ENCODE measurements at regions of chr1 and their contacts with region 1.

Region 1: DNA sequence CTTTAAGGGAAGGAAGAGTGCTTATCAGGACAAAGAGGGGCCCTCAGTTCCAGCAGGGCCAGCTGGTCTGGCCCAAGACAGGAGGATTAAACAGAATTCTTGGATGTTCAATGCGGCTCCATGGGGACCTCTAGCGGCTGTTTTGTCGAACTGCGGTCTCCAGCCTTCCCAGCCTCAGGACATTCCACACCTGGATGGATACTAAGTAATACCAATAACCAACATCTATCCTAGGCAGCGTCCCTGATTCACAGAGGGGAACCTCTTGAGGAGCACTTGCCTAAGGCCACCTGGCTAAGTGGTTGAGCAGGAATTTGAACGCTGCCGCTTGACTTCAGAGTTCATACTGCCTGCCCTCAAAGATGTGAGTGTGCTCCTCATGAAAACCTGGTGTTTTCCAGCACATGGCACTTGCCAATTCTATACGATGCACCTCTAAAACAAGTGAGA is 15.5 kb upstream of the CD247 start:
- DNase-seq: peak; percentile 48
- ATAC-seq: peak; percentile 92
- H3K4me3 ChIP-seq: no peak overlapping the region
- H3K27ac ChIP-seq: no peak overlapping the region
- H3K4me1 ChIP-seq: no peaks in the 10 kb centered on the region
- H3K27me3 ChIP-seq: no peaks in the 10 kb centered on the region; the same call in 1 of the 2 replicates
- CTCF ChIP-seq: peak; percentile 94

Region 2: GRCh38 chr1:167263819-167264464 is 269.9 kb before region 1 on chr1:
- CTCF ChIA-PET with region 1: interaction called, 13 read pairs
- POLR2A ChIA-PET with region 1: no interaction called
- in situ Hi-C with region 1: no loop called
- intact Hi-C with region 1: loop called (anchors 10 kb)
- DNase-seq: no peak
- ATAC-seq: no peak
- H3K4me3 ChIP-seq: no peak overlapping the region
- H3K27ac ChIP-seq: no peak overlapping the region
- H3K4me1 ChIP-seq: peaks cover 5% of the 10 kb centered on the region; the same call in 1 of the 2 replicates
- H3K27me3 ChIP-seq: no peaks in the 10 kb centered on the region
- CTCF ChIP-seq: no peak

Region 3: GRCh38 chr1:167401260-167401873 is 132.5 kb before region 1 on chr1:
- CTCF ChIA-PET with region 1: no interaction called
- POLR2A ChIA-PET with region 1: no interaction called
- in situ Hi-C with region 1: no loop called
- intact Hi-C with region 1: loop called (anchors 5 kb)
- DNase-seq: peak; percentile 15
- ATAC-seq: peak; percentile 88
- H3K4me3 ChIP-seq: no peak overlapping the region
- H3K27ac ChIP-seq: no peak overlapping the region
- H3K4me1 ChIP-seq: no peaks in the 10 kb centered on the region
- H3K27me3 ChIP-seq: no peaks in the 10 kb centered on the region
- CTCF ChIP-seq: peak; percentile 82

Region 4: DNA sequence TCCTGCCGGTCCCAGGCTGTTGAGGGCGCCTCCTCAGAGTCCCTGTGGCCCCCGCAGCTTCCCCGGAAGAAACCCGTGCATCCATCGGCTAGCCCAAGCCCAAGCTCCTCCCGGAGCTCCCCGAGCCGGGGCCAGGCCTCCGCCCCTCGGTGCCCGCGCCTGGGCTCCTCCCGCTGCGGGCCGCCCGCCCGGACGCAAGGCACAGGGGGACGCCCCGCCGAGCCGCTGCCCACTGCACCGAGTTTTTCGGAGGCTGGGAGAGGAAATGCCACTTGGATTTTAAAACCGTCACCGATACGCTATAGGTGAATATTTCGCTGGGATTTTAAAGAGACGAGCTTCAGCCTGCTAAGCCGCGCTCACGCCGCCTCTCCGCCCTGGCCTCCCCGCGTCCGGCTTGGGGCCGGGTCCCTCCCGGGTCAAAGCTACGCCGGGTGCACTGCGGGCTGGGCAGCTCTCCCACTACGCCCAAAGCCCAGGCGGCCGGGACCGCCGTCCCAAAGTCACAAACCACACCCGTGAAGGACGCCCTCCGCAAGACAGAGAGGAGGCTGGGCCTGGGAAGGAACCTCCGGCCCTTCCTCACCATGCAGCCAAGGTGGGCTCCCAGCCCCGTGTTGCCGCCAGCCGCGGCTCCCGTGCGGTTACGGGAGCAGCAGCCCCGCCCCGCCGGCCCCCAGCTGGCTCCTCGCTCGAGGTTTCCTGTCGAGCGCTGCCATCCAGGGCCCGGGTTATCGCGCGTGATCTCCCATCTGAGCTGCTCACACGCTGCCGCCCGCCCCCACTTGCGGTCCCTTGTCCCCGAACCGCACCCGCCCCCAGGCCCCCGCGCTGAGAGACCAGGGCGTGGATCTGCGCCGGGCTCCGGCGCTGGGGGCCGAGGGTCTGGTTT is 78.7 kb before region 1 on chr1:
- CTCF ChIA-PET with region 1: no interaction called
- POLR2A ChIA-PET with region 1: no interaction called
- in situ Hi-C with region 1: no loop called
- intact Hi-C with region 1: loop called (anchors 5 kb)
- DNase-seq: no peak
- ATAC-seq: peak; percentile 83
- H3K4me3 ChIP-seq: peak overlapping the region; percentile 60 to 75
- H3K27ac ChIP-seq: no peak overlapping the region; the same call in 1 of the 2 replicates
- H3K4me1 ChIP-seq: 0 out of 2 replicates have a peak, but pooled peaks cover 2% of the 10 kb centered on the region
- H3K27me3 ChIP-seq: no peaks in the 10 kb centered on the region
- CTCF ChIP-seq: no peak

Region 5: DNA sequence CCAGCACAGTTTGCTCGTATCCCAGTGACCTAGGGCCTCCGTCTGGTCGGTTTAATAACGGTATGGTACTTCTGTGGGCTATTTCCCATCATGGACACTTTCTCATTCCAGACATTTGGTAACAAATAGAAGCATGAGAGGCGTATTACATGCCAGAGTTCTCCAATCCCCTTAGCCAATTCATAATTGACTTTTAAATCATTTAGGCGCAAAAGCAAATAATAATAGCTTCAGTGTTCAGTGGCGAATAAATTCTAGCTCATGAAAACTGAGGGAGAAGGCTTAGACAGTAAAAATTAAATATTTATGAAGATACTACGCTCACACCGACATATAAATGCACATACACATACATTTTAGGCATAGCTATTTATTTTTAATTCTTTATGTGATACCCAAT is 66.1 kb before region 1 on chr1:
- CTCF ChIA-PET with region 1: no interaction called
- POLR2A ChIA-PET with region 1: interaction called, 10 read pairs
- in situ Hi-C with region 1: no loop called
- intact Hi-C with region 1: no loop called
- DNase-seq: no peak
- ATAC-seq: no peak
- H3K4me3 ChIP-seq: no peak overlapping the region
- H3K27ac ChIP-seq: no peak overlapping the region
- H3K4me1 ChIP-seq: no peaks in the 10 kb centered on the region
- H3K27me3 ChIP-seq: no peaks in the 10 kb centered on the region
- CTCF ChIP-seq: no peak

Region 6: GRCh38 chr1:167563579-167564246 is 29.8 kb after region 1 on chr1:
- CTCF ChIA-PET with region 1: no interaction called
- POLR2A ChIA-PET with region 1: no interaction called
- in situ Hi-C with region 1: no loop called
- intact Hi-C with region 1: no loop called
- DNase-seq: no peak
- ATAC-seq: no peak
- H3K4me3 ChIP-seq: no peak overlapping the region
- H3K27ac ChIP-seq: no peak overlapping the region
- H3K4me1 ChIP-seq: no peaks in the 10 kb centered on the region
- H3K27me3 ChIP-seq: no peaks in the 10 kb centered on the region
- CTCF ChIP-seq: no peak